Left ventricle myocardium inferior (tissue), 1 donor: ENCODE measurements at regions of chr5 and their contacts with region 1.

Region 1: GRCh38 chr5:137498736-137499505 is at the start of gene SPOCK1:
- DNase-seq: peak; percentile 72
- H3K4me3 ChIP-seq: peak within 1 kb of the TSS; percentile 68
- H3K27ac ChIP-seq: no peak within 1 kb of the TSS
- H3K4me1 ChIP-seq: peaks cover 12% of the 10 kb centered on the region
- H3K27me3 ChIP-seq: peaks cover 76% of the 10 kb centered on the region
- CTCF ChIP-seq: peak; percentile 78
- total RNA-seq, gene SPOCK1: 28.6 TPM

Region 2: GRCh38 chr5:136802383-136802782 is 696.5 kb before region 1 on chr5:
- intact Hi-C with region 1: loop called (anchors 10 kb)
- DNase-seq: no peak
- H3K4me3 ChIP-seq: no peak overlapping the region
- H3K27ac ChIP-seq: no peak overlapping the region
- H3K4me1 ChIP-seq: no peaks in the 10 kb centered on the region
- H3K27me3 ChIP-seq: no peaks in the 10 kb centered on the region
- CTCF ChIP-seq: peak; percentile 56

Region 3: DNA sequence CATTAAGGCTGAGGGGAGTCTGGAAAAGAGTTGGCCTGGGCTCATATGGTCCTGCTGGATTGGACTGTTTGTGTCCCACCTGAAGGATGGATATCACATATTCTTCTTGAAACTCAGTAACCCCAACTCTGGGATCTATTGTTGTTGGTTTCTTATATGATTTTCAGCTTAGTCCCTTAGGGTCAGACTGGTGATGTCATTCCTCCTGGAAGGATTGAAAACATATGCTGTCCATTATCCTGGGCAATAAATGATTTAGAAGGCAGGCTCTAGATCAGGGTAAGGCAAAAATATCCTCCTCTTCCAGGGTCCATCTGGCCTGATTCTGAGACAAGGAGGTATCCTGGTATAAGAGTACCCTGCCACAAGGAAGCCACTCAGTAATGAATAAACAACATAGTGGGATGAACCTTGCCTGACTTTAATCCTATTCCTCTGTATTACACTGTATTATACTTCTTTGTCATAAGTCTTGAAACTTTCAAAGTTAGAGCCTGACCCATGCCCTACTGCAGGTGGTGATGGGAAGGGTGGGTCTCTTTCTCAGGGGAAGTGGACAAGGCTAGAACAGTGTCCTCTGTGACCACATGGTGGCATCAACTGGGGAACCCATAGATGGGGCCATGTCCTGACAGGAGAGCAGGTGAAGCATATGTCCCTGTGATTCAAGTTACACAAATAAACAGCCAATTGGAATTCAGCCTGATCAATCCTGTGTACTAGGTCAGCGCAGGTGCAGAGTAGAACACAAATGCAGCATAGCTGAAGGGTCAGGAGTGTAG is 679.2 kb before region 1 on chr5:
- intact Hi-C with region 1: no loop called
- DNase-seq: no peak
- H3K4me3 ChIP-seq: no peak overlapping the region
- H3K27ac ChIP-seq: no peak overlapping the region
- H3K4me1 ChIP-seq: peaks cover 13% of the 10 kb centered on the region
- H3K27me3 ChIP-seq: no peaks in the 10 kb centered on the region
- CTCF ChIP-seq: no peak

Region 4: DNA sequence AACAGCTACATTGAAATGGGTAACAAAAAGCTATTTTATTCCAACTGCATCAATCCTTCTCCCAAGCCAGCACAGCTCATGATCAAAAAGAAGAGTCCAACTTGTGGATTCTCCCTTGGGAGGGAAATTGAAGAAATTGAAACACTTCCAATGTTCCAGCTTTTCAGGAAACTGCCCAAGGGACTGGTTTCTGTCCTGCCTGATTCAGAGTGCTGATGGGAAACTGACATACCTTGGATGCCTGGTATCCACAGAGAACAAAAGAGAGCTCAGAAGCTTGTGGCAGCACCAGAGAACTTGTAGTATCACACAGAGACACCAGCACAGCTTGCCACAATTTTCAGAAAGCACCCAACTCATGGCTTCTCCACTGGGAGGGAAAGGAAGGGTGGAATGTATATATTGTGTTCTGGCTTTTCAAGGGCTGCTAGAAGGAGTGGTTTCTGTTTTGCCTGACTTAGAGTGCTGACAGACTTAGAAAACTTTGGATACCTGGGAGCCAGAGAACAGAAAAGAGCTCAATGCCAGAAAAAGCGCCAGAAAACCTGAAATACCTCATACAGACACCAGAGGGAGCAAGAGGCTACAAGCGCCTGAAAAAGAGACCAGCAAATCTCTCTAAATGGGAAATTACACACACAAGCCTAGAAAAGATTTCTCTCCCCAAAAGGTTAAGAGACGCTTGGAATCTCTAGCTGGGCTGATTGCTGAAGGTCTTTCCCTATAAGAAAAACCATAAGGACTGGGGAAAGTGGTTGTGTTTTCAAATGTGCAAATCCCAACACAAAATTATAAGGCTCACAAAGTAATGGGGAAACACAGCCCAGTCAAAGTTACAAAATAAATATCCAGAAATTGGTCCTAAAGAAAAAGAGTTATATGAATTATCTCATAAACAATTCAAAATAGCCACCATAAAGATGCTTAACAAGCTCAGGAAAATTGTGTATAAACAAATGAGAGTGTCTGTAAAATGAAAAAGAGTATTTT is 178.6 kb before region 1 on chr5:
- intact Hi-C with region 1: loop called (anchors 5 kb)
- DNase-seq: no peak
- H3K4me3 ChIP-seq: no peak overlapping the region
- H3K27ac ChIP-seq: no peak overlapping the region
- H3K4me1 ChIP-seq: peaks cover 17% of the 10 kb centered on the region
- H3K27me3 ChIP-seq: peaks cover 66% of the 10 kb centered on the region
- CTCF ChIP-seq: peak; percentile 87

Region 5: GRCh38 chr5:137684761-137685160 is 185.8 kb after region 1 on chr5:
- intact Hi-C with region 1: no loop called
- DNase-seq: no peak
- H3K4me3 ChIP-seq: no peak overlapping the region
- H3K27ac ChIP-seq: no peak overlapping the region
- H3K4me1 ChIP-seq: peaks cover 5% of the 10 kb centered on the region
- H3K27me3 ChIP-seq: no peaks in the 10 kb centered on the region
- CTCF ChIP-seq: no peak